ENCODE measurements at regions of chr1 and their contacts with region 1.

Region 1: DNA sequence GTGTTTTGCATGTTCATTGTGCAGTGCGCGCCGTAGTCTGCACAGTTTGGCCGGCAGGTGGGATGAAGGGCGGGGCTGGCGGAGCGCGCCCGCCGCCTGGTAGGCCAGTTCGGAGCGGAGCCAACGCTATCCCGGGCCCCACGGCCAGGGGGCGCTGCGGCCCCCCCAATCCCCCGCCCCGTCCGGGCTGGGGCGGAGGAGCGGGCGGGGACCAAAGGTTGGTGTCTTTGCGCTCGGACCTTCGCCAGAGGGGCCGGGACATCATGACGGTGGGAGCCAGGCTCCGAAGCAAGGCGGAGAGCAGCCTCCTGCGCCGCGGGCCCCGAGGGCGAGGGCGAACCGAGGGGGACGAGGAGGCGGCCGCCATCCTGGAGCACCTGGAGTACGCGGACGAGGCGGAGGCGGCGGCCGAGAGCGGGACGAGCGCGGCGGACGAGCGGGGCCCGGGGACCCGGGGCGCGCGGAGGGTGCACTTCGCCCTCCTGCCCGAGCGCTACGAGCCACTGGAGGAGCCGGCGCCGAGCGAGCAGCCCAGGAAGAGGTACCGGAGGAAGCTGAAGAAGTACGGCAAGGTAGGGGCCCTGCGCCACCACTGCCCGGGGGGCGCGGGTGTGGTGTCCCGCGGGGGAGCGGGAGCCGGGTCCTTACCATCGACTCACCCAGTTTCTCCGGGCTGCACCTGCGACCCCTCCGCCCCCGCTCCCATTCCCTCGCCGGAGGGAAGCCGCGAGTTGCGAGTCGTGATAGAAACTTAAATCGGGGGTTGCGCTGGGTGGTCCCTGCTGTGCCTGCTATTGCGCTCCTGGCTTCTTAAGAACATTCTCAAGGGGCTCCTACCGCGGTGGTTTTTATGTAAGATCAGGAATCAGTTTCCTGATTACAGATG is at the start of gene C1orf115:
- DNase-seq: peak; percentile 75 to 96 (median 88)
- ATAC-seq: peak; percentile 97 to 99 (median 98)
- H3K4me3 ChIP-seq: peak within 1 kb of the TSS; percentile 62 to 88 (median 73)
- H3K27ac ChIP-seq: peak within 1 kb of the TSS in 3 of 4 donors; percentile 19 to 48 (median 45)
- H3K4me1 ChIP-seq: peaks cover 0 to 7% (median 0%) of the 10 kb centered on the region in 3 donors
- H3K27me3 ChIP-seq: no peaks in the 10 kb centered on the region
- CTCF ChIP-seq: peak; percentile 98 to 99 (median 99)
- total RNA-seq, gene C1orf115: 5.0 to 17.0 (median 8.8) TPM

Region 2: GRCh38 chr1:220498188-220498587 is 192.2 kb before region 1 on chr1:
- intact Hi-C with region 1: no loop called
- DNase-seq: no peak
- ATAC-seq: peak in 2 of 4 donors; percentile 50 to 65
- H3K4me3 ChIP-seq: no peak overlapping the region
- H3K27ac ChIP-seq: no peak overlapping the region
- H3K4me1 ChIP-seq: no peaks in the 10 kb centered on the region
- H3K27me3 ChIP-seq: no peaks in the 10 kb centered on the region
- CTCF ChIP-seq: no peak

Region 3: GRCh38 chr1:220733090-220733601 is 42.8 kb after region 1 on chr1:
- intact Hi-C with region 1: loop called in 1 of 3 experiments (anchors 5 kb)
- DNase-seq: peak in 5 of 6 donors; percentile 68 to 84 (median 79)
- ATAC-seq: peak; percentile 87 to 97 (median 94)
- H3K4me3 ChIP-seq: peak overlapping the region in 1 of 4 donors; percentile 32
- H3K27ac ChIP-seq: peak overlapping the region in 2 of 4 donors; percentile 10 to 51
- H3K4me1 ChIP-seq: peaks cover 0 to 10% (median 0%) of the 10 kb centered on the region in 3 donors
- H3K27me3 ChIP-seq: no peaks in the 10 kb centered on the region
- CTCF ChIP-seq: peak; percentile 51 to 85 (median 72)

Region 4: DNA sequence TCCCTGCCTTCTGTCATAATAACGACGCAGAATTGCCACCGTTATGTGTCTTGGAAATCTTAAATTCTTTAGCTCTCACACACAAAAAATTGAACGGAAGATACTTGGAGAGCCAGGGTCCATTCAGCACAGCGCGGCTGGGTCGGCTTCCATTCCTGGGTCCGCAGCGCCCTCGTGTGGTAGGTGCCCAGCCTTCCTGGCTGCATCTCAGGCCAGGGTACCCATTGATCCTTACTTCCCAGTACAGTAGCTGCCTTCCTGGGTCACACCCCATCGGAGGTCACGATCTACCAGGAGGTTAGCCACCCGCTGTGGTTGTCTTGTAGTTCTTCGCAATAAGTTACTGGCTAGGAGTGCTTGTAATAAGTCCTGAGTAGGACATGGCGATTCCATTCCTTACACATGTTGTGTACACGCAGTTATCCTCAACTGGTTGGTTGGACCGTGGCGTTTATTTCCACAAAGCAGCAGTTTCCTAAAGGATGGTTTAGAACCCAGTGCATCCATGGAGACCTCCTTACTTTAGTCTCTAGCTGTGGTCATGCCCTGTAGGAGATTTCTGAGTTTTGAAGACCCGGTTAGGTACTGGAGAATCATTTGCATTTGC is 86.4 kb after region 1 on chr1:
- intact Hi-C with region 1: loop called in 2 of 3 experiments (anchors 5 kb)
- DNase-seq: peak; percentile 74 to 98 (median 87)
- ATAC-seq: peak; percentile 97 to 100 (median 99)
- H3K4me3 ChIP-seq: no peak overlapping the region
- H3K27ac ChIP-seq: no peak overlapping the region
- H3K4me1 ChIP-seq: no peaks in the 10 kb centered on the region
- H3K27me3 ChIP-seq: no peaks in the 10 kb centered on the region
- CTCF ChIP-seq: peak; percentile 86 to 91 (median 88)

Region 5: DNA sequence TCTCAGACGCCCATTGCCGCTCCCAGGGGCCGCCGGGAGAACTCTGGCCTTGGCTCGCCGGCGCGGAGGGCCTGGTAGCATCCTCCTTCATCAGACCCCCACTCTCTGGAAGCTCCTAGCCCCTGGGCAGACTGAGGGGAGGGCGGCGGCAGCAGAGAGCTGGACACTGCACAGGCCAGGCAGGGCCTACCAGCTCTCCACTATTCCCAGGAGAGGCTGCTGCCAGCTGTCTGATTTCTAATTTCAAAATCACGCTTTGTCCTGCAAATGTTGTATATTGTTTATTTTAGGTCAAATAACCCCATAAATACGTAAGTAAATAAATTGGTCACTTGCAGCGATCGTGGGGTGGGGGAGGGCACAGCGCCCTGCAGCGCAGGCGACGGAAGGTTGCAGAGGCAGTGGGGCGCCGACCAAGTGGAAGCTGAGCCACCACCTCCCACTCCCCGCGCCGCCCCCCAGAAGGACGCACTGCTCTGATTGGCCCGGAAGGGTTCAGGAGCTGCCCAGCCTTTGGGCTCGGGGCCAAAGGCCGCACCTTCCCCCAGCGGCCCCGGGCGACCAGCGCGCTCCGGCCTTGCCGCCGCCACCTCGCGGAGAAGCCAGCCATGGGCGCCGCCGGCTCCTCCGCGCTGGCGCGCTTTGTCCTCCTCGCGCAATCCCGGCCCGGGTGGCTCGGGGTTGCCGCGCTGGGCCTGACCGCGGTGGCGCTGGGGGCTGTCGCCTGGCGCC is 96.1 kb after region 1 on chr1 and contains the start of gene MTARC1:
- intact Hi-C with region 1: loop called in 1 of 3 experiments (anchors 5 kb)
- DNase-seq: peak; percentile 77 to 90 (median 86)
- ATAC-seq: peak; percentile 76 to 88 (median 86)
- H3K4me3 ChIP-seq: peak within 1 kb of the TSS; percentile 49 to 73 (median 56)
- H3K27ac ChIP-seq: peak within 1 kb of the TSS; percentile 67 to 82 (median 78)
- H3K4me1 ChIP-seq: peaks cover 0 to 4% (median 0%) of the 10 kb centered on the region in 3 donors
- H3K27me3 ChIP-seq: no peaks in the 10 kb centered on the region
- CTCF ChIP-seq: no peak
- total RNA-seq, gene MTARC1: 2.5 to 10.8 (median 7.4) TPM

Measured in pancreas (tissue), 10 donors.